ENCODE measurements at regions of chr15 and their contacts with region 1.

Region 1: DNA sequence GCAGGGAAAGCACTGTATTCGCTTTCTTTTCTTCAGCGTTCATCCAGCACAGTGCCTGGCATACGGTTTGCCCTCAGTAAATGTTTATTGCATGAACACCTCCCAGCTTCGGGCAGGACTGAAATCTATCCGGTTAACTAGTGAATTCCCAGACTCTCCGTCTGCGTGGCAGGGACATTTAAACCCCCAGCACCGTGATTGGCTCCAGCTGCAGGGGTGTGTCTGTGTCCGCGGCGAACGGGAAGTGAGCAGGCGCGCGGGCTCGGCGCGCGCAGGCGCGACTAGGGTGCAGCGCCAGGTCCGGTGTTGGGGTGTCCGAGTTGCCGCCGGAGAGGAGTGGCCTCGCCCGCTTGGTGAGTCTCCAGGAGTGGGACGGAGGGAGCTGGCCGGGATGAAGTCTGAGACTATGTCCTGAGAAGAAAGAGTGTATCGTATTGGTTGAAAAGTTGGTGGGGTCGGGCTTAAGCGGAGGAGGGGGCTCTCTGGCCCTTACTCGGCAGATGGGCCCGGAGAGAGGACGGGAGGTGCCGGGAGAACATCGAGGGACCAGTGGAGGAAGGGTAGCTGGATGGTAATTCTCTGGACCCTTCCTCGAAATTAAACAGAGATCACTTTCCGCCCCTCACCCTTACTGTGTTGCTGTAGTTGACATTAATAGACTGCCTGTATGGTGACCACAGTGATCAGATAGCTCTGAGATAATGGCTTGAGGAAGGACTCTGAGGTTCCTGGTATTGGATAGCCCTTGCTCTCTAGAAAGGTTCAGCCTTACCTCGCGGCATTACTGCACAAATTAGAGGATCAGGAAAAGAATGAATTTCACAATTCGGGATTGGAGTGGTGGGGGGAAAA is at the start of gene SNAP23:
- DNase-seq: peak; percentile 93
- H3K4me3 Mint-ChIP-seq: peak within 1 kb of the TSS; percentile 87
- H3K27ac Mint-ChIP-seq: peak within 1 kb of the TSS; percentile 95
- H3K4me1 Mint-ChIP-seq: peaks cover 25% of the 10 kb centered on the region
- H3K27me3 Mint-ChIP-seq: no peaks in the 10 kb centered on the region
- CTCF ChIP-seq: no peak
- total RNA-seq, gene SNAP23: 47.4 and 65.7 TPM in 2 replicates

Region 2: DNA sequence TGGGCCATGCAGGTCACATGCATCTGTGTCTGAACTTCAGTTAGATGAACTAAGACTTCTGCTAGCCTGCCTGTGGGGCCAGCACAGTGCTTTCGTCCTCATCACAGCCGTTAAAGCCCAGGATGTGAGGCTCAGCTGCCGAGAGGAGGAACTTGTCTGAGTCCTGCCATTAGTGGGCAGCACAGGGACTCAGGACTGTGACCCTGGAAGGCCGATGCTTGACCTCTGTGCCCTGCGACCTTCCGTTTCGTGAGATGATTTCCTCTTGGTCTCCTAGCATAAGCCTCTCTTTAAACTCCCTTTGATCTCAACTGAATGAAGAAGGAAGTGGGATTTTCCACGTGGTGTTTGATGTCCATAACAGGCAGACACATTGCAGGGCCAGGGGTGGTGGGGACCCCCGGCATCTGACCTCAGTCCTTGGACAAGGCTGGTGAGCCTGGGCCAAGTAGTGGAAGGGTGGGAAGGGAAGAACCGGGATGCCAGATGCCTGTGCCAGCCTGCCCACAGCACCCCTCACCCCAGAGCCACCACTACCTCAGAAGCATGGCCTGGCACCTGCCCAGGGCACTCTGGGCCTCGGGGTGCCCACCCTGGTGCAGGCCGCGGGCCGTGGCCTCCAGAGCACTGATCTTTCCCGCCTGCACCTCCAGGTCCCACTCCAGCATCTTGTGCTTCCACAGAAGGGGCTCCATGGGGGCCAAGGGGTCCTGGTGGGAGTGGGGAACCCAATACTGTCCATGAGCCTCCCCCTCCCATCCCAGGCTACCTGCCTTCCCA is 635.3 kb before region 1 on chr15:
- CTCF ChIA-PET with region 1: no interaction called
- POLR2A ChIA-PET with region 1: no interaction called
- intact Hi-C with region 1: no loop called
- DNase-seq: no peak
- H3K4me3 Mint-ChIP-seq: no peak overlapping the region
- H3K27ac Mint-ChIP-seq: no peak overlapping the region
- H3K4me1 Mint-ChIP-seq: no peaks in the 10 kb centered on the region
- H3K27me3 Mint-ChIP-seq: no peaks in the 10 kb centered on the region
- CTCF ChIP-seq: no peak

Region 3: DNA sequence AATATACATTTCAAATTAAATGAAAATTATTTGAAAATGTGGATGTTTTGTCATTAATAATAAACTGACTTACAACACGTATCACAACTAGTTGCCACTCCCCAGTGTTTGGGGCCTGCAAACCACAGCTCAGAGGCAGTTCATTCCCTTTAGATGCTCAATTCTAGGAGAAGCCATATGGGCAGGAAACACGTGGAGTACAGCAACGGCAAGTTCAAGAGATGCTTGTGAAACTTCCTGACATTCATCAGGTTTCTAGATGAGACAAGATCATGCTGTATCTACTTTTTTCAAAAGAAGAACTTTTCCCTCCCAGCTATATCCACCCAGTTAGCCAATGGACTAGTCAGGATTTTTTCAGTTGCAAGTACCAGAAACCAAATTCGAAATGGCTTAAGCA is 383.7 kb before region 1 on chr15:
- CTCF ChIA-PET with region 1: no interaction called
- POLR2A ChIA-PET with region 1: no interaction called
- intact Hi-C with region 1: no loop called
- DNase-seq: no peak
- H3K4me3 Mint-ChIP-seq: no peak overlapping the region
- H3K27ac Mint-ChIP-seq: no peak overlapping the region
- H3K4me1 Mint-ChIP-seq: no peaks in the 10 kb centered on the region
- H3K27me3 Mint-ChIP-seq: peaks cover 11% of the 10 kb centered on the region
- CTCF ChIP-seq: no peak

Region 4: GRCh38 chr15:42474827-42475226 is 20.8 kb before region 1 on chr15:
- CTCF ChIA-PET with region 1: interaction called, 3 read pairs
- POLR2A ChIA-PET with region 1: interaction called, 20 read pairs
- intact Hi-C with region 1: no loop called
- DNase-seq: no peak
- H3K4me3 Mint-ChIP-seq: no peak overlapping the region
- H3K27ac Mint-ChIP-seq: no peak overlapping the region
- H3K4me1 Mint-ChIP-seq: peaks cover 6% of the 10 kb centered on the region
- H3K27me3 Mint-ChIP-seq: no peaks in the 10 kb centered on the region
- CTCF ChIP-seq: no peak

Region 5: GRCh38 chr15:42548253-42549031 is 52.9 kb after region 1 on chr15 and contains the starts of genes HAUS2 and LRRC57:
- CTCF ChIA-PET with region 1: interaction called, 3 read pairs
- POLR2A ChIA-PET with region 1: interaction called, 69 read pairs
- intact Hi-C with region 1: loop called (anchors 5 kb)
- DNase-seq: peak; percentile 86
- H3K4me3 Mint-ChIP-seq: peak within 1 kb of the TSS; percentile 88
- H3K27ac Mint-ChIP-seq: peak within 1 kb of the TSS; percentile 96
- H3K4me1 Mint-ChIP-seq: peaks cover 34% of the 10 kb centered on the region
- H3K27me3 Mint-ChIP-seq: no peaks in the 10 kb centered on the region
- CTCF ChIP-seq: no peak
- total RNA-seq, gene HAUS2: 22.6 and 29.6 TPM in 2 replicates
- total RNA-seq, gene LRRC57: 18.3 and 24.7 TPM in 2 replicates

Region 6: GRCh38 chr15:42650208-42651066 is 154.8 kb after region 1 on chr15:
- CTCF ChIA-PET with region 1: interaction called, 4 read pairs
- POLR2A ChIA-PET with region 1: interaction called, 4 read pairs
- intact Hi-C with region 1: loop called (anchors 10 kb)
- DNase-seq: peak; percentile 88
- H3K4me3 Mint-ChIP-seq: no peak overlapping the region
- H3K27ac Mint-ChIP-seq: no peak overlapping the region
- H3K4me1 Mint-ChIP-seq: peaks cover 6% of the 10 kb centered on the region
- H3K27me3 Mint-ChIP-seq: no peaks in the 10 kb centered on the region
- CTCF ChIP-seq: peak; percentile 72